ENCODE measurements at regions of chr1 and their contacts with region 1.

Region 1: DNA sequence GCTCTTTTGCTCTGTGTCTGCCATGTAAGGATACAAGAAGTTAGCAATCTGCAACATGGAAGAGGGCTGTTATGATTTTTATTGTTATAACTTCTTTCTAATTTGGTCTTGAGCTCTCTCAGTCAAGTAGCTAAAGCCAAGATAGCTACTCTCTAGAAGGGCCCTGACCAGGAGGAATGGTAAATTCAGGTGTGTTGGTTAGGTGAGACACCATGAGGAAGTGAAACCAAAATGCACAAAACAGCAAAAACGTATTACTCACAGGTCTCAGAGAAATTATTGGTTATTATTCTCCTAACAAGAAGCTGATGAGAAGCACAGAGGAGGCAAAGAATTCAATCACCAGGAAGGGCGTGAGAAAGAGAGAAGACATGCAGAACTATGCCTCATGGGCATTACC is 51.8 kb upstream of the INSL5 start:
- DNase-seq: no peak
- H3K4me3 ChIP-seq: no peak overlapping the region
- CTCF ChIP-seq: no peak
- POLR2A ChIP-seq: no peak

Region 2: DNA sequence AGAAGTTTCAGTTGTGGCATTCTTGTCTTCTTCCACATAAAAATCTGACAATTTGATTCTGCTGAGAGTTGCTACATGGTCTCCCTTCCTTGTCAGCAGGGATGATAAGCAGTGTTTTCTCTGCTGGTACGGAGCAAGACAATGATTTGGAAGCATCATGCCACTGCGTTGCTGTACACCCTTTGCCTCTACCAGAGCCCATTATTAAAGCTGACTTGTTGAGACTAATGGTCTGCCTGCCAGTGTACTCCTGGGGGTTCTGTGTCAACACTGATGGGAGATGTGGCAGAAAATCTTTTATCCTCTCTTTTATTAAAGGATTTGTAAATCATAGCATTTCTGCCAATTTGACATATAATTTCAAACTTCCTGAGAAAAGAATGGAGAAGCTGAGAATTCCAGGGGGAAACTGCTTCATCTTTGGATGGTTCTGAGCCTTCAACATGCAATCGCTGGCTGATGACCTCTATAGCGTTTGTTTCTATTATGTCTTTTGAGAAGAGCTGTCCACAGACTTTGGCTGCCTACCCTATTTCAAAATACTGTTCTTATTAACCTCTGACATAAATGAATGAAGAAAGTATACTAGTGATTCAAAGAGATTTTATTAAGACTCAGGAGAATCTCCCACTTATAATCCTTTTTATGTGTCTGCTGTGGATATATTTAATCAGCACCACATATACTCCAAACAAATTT is 148.5 kb before region 1 on chr1:
- intact Hi-C with region 1: loop called (anchors 5 kb)
- DNase-seq: no peak
- H3K4me3 ChIP-seq: no peak overlapping the region
- CTCF ChIP-seq: no peak
- POLR2A ChIP-seq: no peak

Measured in lower leg skin (tissue), 4 donors.